A549 (cell line): ENCODE measurements at regions of chr7 and their contacts with region 1.

Region 1: DNA sequence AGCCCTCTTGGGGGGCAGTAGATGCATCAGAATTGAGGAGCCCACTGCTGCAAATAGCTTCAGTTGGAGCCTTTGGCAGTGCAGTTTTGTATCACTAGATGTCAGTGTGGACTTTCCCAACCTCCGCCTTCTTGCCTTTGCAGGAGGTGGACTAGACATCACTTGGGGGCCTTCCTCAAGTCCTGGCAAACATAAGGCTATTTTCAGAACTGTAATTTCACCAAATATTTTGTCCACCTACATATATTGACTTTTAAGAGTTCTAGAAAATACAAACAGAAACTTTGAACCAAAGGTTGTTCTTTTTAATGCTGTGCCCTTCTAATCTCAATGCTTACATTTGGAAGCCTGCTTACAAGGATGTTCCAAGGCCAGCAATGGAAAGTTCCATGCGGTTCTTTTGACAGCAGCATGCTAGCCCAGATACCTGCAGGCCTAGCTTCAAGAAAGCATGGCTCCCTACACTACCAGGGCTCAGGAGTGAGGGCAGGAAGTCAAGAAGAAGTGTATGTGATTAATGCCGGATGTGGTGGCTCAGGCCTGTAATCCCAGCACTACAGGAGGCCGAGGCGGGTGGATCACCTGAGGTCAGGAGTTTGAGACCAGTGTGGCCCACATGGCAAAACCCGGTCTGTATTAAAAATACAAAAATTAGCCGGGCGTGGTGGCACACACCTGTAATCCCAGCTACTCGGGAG is 8.0 kb upstream of the ZNRF2 start:
- DNase-seq: peak; percentile 40 to 70
- ATAC-seq: peak; percentile 87 to 96
- H3K4me3 ChIP-seq: no peak overlapping the region
- H3K27ac ChIP-seq: no peak overlapping the region
- H3K4me1 ChIP-seq: no peaks in the 10 kb centered on the region
- CTCF ChIP-seq: peak; percentile 81
- EP300 ChIP-seq: no peak
- POLR2A ChIP-seq: no peak
- RAD21 ChIP-seq: peak; percentile 90 to 92

Region 2: DNA sequence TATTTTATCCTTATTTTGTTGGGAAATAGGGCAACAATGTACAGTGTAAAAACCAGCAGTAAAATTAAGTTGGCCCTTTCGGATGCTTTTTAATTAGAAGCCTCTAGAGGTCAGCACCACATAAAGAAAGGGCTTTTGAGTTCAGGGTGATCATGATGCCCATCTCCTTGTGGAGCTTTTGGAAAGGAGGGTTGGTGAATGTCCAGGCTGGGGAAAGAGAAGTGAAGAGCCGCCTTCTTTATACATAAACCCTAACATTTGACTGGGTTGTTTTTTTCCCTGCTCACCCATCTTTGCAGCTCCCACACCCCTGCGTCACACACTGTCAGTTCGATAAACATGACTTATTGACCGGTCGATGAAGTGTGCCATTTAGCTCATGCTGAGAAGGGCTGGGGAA is 111.8 kb before region 1 on chr7:
- CTCF ChIA-PET with region 1: interaction called, 42 read pairs
- POLR2A ChIA-PET with region 1: no interaction called
- DNase-seq: peak; percentile 55 to 57
- ATAC-seq: peak; percentile 54 to 84; a peak in 5 of 6 replicates
- H3K4me3 ChIP-seq: no peak overlapping the region
- H3K27ac ChIP-seq: no peak overlapping the region
- H3K4me1 ChIP-seq: peaks cover 28% of the 10 kb centered on the region
- CTCF ChIP-seq: peak; percentile 84
- EP300 ChIP-seq: no peak
- POLR2A ChIP-seq: no peak
- RAD21 ChIP-seq: peak; percentile 84

Region 3: GRCh38 chr7:30396389-30396788 is 120.0 kb after region 1 on chr7:
- CTCF ChIA-PET with region 1: interaction called, 10 read pairs
- POLR2A ChIA-PET with region 1: no interaction called
- DNase-seq: peak in 1 of 2 experiments; percentile 20
- ATAC-seq: no peak
- H3K4me3 ChIP-seq: no peak overlapping the region
- H3K27ac ChIP-seq: no peak overlapping the region
- H3K4me1 ChIP-seq: no peaks in the 10 kb centered on the region
- CTCF ChIP-seq: peak; percentile 21; the same call in 2 of the 3 replicates
- EP300 ChIP-seq: no peak
- POLR2A ChIP-seq: no peak
- RAD21 ChIP-seq: peak; percentile 12 to 23; a peak in 1 of 5 replicates

Region 4: GRCh38 chr7:30548762-30549344 is 272.5 kb after region 1 on chr7:
- CTCF ChIA-PET with region 1: interaction called, 13 read pairs
- POLR2A ChIA-PET with region 1: no interaction called
- DNase-seq: peak; percentile 69 to 79
- ATAC-seq: peak; percentile 94 to 97
- H3K4me3 ChIP-seq: no peak overlapping the region
- H3K27ac ChIP-seq: no peak overlapping the region
- H3K4me1 ChIP-seq: peaks cover 9% of the 10 kb centered on the region; the same call in 2 of the 3 replicates
- CTCF ChIP-seq: peak; percentile 73
- EP300 ChIP-seq: no peak
- POLR2A ChIP-seq: no peak
- RAD21 ChIP-seq: peak; percentile 47 to 57

Region 5: GRCh38 chr7:30564243-30564892 is 288.0 kb after region 1 on chr7:
- CTCF ChIA-PET with region 1: interaction called, 86 read pairs
- POLR2A ChIA-PET with region 1: interaction called, 3 read pairs
- DNase-seq: peak; percentile 64 to 83
- ATAC-seq: peak; percentile 98 to 99
- H3K4me3 ChIP-seq: no peak overlapping the region
- H3K27ac ChIP-seq: no peak overlapping the region
- H3K4me1 ChIP-seq: no peaks in the 10 kb centered on the region
- CTCF ChIP-seq: peak; percentile 91
- EP300 ChIP-seq: no peak
- POLR2A ChIP-seq: no peak
- RAD21 ChIP-seq: peak; percentile 89 to 93

Region 6: DNA sequence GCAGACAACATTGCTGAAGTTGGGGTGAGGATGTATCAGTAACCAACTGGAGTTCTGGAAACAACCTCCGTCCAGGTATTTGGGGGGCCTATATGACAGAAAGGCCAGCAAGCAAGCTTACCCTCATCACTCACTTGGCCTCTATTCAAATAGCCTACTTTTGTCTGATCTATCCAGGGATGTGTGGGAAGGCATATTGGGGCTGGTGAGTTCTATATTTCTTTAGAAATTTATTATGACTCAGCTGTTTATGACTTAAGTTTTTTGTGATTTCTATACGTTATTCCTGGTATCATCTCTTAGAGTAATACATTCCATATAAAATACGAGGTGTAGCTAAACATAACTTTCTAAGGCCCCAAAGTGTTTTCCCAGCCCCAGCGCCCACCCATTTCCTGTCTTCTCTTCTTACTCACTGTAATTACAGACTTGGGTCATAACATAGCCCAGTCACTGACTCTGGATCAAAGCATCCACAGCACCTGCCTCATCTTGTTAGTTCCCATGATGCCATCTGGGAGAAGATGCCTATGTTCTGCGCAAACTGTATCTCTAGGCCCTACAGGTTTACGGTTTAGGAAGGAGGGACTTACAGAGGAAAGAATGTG is 336.4 kb after region 1 on chr7:
- CTCF ChIA-PET with region 1: no interaction called
- POLR2A ChIA-PET with region 1: no interaction called
- DNase-seq: no peak
- ATAC-seq: no peak
- H3K4me3 ChIP-seq: no peak overlapping the region
- H3K27ac ChIP-seq: no peak overlapping the region
- H3K4me1 ChIP-seq: no peaks in the 10 kb centered on the region
- CTCF ChIP-seq: no peak
- EP300 ChIP-seq: no peak
- POLR2A ChIP-seq: no peak
- RAD21 ChIP-seq: no peak